Dorsolateral prefrontal cortex (tissue), 120 donors: ENCODE measurements at regions of chr1 and their contacts with region 1.

Region 1: GRCh38 chr1:2133039-2133878 is 61.3 kb downstream of the FAAP20 start:
- DNase-seq: peak; percentile 75 to 99 (median 96)
- H3K4me3 ChIP-seq: peak overlapping the region; percentile 30 to 70 (median 54)
- H3K27ac ChIP-seq: peak overlapping the region; percentile 55 to 98 (median 93)
- H3K27me3 ChIP-seq: no peaks in the 10 kb centered on the region
- CTCF ChIP-seq: peak in 16 of 56 donors; percentile 5 to 49 (median 18)

Region 2: GRCh38 chr1:2091611-2092604 is 41.4 kb before region 1 on chr1:
- intact Hi-C with region 1: loop called (anchors 2 to 5 kb)
- DNase-seq: peak in 8 of 10 donors; percentile 55 to 78 (median 71)
- H3K4me3 ChIP-seq: peak overlapping the region in 23 of 59 donors; percentile 4 to 40 (median 19)
- H3K27ac ChIP-seq: peak overlapping the region in 12 of 59 donors; percentile 12 to 66 (median 34)
- H3K27me3 ChIP-seq: no peaks in the 10 kb centered on the region
- CTCF ChIP-seq: peak in 55 of 56 donors; percentile 4 to 88 (median 73)

Region 3: GRCh38 chr1:2098855-2099721 is 34.2 kb before region 1 on chr1:
- intact Hi-C with region 1: loop called in 1 of 2 experiments (anchors 5 kb)
- DNase-seq: peak; percentile 75 to 94 (median 86)
- H3K4me3 ChIP-seq: peak overlapping the region in 26 of 59 donors; percentile 1 to 44 (median 16)
- H3K27ac ChIP-seq: peak overlapping the region in 50 of 59 donors; percentile 10 to 85 (median 71)
- H3K27me3 ChIP-seq: no peaks in the 10 kb centered on the region
- CTCF ChIP-seq: peak in 4 of 56 donors; percentile 8 to 17 (median 13)

Region 4: DNA sequence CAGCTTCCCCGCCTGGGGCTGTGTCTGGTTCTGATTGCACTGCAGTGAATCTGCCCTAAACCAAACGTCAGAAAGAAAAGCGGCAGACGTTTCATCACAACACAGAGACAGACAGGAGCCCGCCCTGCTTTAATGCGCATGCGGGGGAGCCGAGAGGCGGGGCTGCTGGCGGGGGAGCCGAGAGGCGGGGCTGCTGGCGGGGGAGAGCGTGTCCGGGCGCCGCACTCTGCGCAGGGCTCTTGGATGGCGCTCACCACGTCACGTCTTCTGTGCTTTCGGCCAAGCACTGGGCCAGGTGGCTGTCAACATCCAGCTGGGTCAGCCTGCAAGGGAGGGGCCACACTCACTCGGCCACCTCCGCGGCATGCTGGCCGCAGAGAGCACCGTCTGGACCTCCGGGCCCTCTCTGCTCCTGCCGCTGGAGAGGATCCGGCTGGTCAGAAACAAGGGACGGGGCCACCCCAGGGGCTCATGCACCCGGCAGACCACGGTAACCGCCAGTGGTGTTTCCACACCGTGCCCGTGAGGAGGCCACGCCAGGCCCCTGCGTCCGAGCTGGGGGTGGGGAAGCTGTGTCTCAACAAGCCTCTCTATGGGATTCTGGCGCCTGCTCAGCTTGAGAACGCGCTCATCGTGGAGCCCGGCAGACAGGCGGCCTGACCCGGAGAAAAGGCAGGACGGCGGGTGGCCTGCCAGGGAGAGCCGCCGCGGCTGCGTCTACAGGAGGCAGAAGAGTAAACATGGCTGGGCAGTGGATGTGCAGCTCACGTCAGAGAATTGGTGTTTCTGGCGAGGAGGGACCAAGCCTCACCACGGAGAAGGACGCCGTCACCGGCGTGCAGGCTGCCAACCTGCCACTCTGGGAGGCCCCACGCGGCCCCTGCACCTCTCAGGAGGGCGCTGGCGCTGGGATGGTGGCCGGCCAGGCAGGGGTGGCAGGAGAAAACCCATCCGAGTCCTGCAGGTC is 56.5 kb after region 1 on chr1:
- intact Hi-C with region 1: loop called in 1 of 2 experiments (anchors 5 kb)
- DNase-seq: peak; percentile 88 to 99 (median 94)
- H3K4me3 ChIP-seq: peak overlapping the region; percentile 38 to 93 (median 67)
- H3K27ac ChIP-seq: peak overlapping the region; percentile 79 to 99 (median 95)
- H3K27me3 ChIP-seq: no peaks in the 10 kb centered on the region
- CTCF ChIP-seq: peak in 19 of 56 donors; percentile 3 to 44 (median 20)

Region 5: GRCh38 chr1:2233997-2234761 is 100.9 kb after region 1 on chr1:
- intact Hi-C with region 1: loop called in 1 of 2 experiments (anchors 10 kb)
- DNase-seq: peak in 6 of 10 donors; percentile 50 to 81 (median 66)
- H3K4me3 ChIP-seq: peak overlapping the region; percentile 2 to 86 (median 72)
- H3K27ac ChIP-seq: peak overlapping the region in 57 of 59 donors; percentile 2 to 96 (median 84)
- H3K27me3 ChIP-seq: no peaks in the 10 kb centered on the region
- CTCF ChIP-seq: no peak